MCF 10A (cell line): ENCODE measurements at regions of chr1 and their contacts with region 1.

Region 1: GRCh38 chr1:207344221-207344620 is 22.7 kb downstream of the CD55 start:
- DNase-seq: no peak
- H3K4me3 Mint-ChIP-seq: no peak overlapping the region
- H3K27ac Mint-ChIP-seq: no peak overlapping the region
- H3K4me1 Mint-ChIP-seq: peaks cover 10% of the 10 kb centered on the region
- H3K27me3 Mint-ChIP-seq: no peaks in the 10 kb centered on the region
- CTCF ChIP-seq: no peak

Region 2: DNA sequence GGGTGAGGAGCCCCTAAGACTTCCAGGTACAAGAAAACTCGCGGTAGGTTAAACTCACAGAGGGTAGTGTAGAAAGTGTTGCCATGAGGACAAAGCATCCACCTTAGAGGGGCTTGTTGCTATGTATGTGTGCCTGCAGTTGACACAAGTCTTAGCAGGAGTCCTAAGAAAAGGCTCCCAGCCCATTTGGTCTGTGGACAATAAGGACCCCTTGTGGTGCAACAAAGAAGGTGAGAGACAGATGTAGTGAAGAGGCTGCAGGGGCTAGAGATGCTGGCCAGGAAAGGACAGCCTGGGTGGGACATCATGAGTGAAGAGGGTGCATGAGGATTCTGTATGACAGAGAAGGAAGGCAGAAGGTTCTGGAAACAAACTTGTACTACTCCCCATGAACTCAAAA is 535.6 kb before region 1 on chr1:
- CTCF ChIA-PET with region 1: no interaction called
- POLR2A ChIA-PET with region 1: no interaction called
- intact Hi-C with region 1: no loop called
- DNase-seq: peak; percentile 67
- H3K4me3 Mint-ChIP-seq: no peak overlapping the region
- H3K27ac Mint-ChIP-seq: no peak overlapping the region
- H3K4me1 Mint-ChIP-seq: peaks cover 5% of the 10 kb centered on the region
- H3K27me3 Mint-ChIP-seq: peaks cover 41% of the 10 kb centered on the region
- CTCF ChIP-seq: peak; percentile 30

Region 3: GRCh38 chr1:207115269-207115668 is 229.0 kb before region 1 on chr1:
- CTCF ChIA-PET with region 1: no interaction called
- POLR2A ChIA-PET with region 1: no interaction called
- intact Hi-C with region 1: no loop called
- DNase-seq: no peak
- H3K4me3 Mint-ChIP-seq: no peak overlapping the region
- H3K27ac Mint-ChIP-seq: no peak overlapping the region
- H3K4me1 Mint-ChIP-seq: no peaks in the 10 kb centered on the region
- H3K27me3 Mint-ChIP-seq: peaks cover 15% of the 10 kb centered on the region
- CTCF ChIP-seq: no peak

Region 4: DNA sequence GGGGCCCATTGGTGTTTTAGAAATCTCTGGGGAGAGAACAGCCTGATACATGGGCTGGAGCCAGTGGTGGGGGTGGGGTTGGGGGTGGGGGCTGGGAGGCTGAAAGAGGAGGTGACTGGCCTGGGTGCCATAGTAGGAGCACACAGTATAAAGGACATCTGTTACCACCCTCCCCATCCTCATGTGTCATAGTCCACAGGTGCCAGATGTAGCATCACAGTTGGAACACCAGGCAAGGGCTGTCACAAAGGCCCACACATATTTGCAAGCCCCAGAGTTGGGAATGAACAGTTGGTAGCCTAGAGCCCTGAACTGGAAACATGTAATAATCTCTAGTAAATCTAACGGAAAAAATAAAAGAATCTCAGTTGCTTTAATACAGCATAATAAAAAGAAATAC is 54.8 kb after region 1 on chr1:
- CTCF ChIA-PET with region 1: interaction called, 9 read pairs
- POLR2A ChIA-PET with region 1: interaction called, 3 read pairs
- intact Hi-C with region 1: loop called (anchors 1 kb)
- DNase-seq: no peak
- H3K4me3 Mint-ChIP-seq: no peak overlapping the region
- H3K27ac Mint-ChIP-seq: no peak overlapping the region
- H3K4me1 Mint-ChIP-seq: peaks cover under 1% of the 10 kb centered on the region
- H3K27me3 Mint-ChIP-seq: no peaks in the 10 kb centered on the region
- CTCF ChIP-seq: no peak